ENCODE measurements at regions of chr17 and their contacts with region 1.

Region 1: GRCh38 chr17:78903101-78903779 is at the start of gene CEP295NL:
- DNase-seq: no peak
- H3K4me3 ChIP-seq: no peak within 1 kb of the TSS
- H3K27ac ChIP-seq: peak within 1 kb of the TSS in 1 of 2 donors; percentile 45
- H3K4me1 ChIP-seq: peaks cover 0 to 88% (median 44%) of the 10 kb centered on the region in 4 donors
- H3K27me3 ChIP-seq: no peaks in the 10 kb centered on the region
- CTCF ChIP-seq: no peak

Region 2: DNA sequence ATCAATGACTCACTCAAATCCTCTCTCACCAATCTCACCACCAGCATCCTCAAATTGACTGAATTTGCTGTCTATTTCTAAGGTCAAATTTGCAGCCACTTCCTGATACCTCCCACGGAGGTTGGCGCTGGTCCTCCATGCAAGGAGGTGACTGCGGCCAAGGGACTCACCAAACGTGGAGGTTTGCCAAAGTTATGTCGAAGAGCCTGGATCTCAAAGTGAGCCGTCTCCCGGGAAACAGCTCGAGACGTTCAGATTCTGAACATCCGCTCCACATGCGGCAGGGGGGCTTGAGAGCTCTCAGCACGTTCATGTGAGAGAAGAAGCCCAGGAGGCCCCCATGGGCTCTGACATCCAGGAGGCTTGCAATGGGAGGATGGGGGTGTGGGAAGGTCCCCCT is 53.9 kb after region 1 on chr17:
- intact Hi-C with region 1: loop called (anchors 5 kb)
- DNase-seq: no peak
- H3K4me3 ChIP-seq: no peak overlapping the region
- H3K27ac ChIP-seq: no peak overlapping the region
- H3K4me1 ChIP-seq: peaks cover 0 to 4% (median 0%) of the 10 kb centered on the region in 4 donors
- H3K27me3 ChIP-seq: peaks cover 0 to 7% of the 10 kb centered on the region in 2 donors
- CTCF ChIP-seq: no peak